ENCODE measurements at regions of chr6 and their contacts with region 1.

Region 1: GRCh38 chr6:42674780-42675179 is 47.6 kb downstream of the PRPH2 start:
- DNase-seq: no peak
- H3K4me3 ChIP-seq: no peak overlapping the region
- H3K27ac ChIP-seq: no peak overlapping the region
- H3K4me1 ChIP-seq: no peaks in the 10 kb centered on the region
- H3K27me3 ChIP-seq: no peaks in the 10 kb centered on the region
- CTCF ChIP-seq: no peak

Region 2: DNA sequence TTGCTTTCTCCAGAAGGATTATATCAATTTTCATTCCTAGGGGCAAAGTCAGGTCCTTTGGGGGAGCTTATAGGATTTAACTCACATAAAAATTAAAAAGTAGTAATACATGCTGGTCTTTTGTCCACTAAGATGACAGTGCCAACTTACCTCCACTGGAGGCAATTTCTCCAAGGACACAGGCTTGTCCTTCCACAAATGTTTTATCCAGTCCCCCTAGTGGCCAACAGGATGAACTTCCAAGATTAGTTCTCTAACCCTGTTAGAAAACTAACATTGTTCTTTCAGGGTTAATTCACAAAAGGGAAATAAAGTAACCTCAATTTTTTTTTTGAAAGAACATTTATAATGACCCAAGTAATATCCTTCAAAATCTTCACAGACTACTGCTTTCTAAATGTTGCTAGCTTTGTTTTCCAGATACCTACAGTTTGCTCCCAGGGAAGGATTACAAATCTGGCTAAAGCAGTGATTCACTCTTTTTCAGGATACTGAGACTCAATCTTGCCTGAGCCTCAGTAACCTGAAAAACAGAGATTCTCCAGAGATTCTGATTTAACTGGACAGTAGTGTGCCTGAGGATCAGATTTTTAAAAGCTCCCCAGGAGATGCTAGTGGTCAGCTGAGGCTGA is 142.6 kb before region 1 on chr6:
- CTCF ChIA-PET with region 1: no interaction called
- POLR2A ChIA-PET with region 1: no interaction called
- intact Hi-C with region 1: no loop called
- DNase-seq: peak; percentile 12 to 49
- H3K4me3 ChIP-seq: no peak overlapping the region
- H3K27ac ChIP-seq: no peak overlapping the region
- H3K4me1 ChIP-seq: peaks cover 14% of the 10 kb centered on the region
- H3K27me3 ChIP-seq: no peaks in the 10 kb centered on the region
- CTCF ChIP-seq: peak; percentile 94

Region 3: GRCh38 chr6:42890311-42891198 is 215.8 kb after region 1 on chr6:
- CTCF ChIA-PET with region 1: no interaction called
- POLR2A ChIA-PET with region 1: interaction called, 11 read pairs
- intact Hi-C with region 1: no loop called
- DNase-seq: peak; percentile 87 to 93
- H3K4me3 ChIP-seq: peak overlapping the region; percentile 80
- H3K27ac ChIP-seq: peak overlapping the region; percentile 89
- H3K4me1 ChIP-seq: peaks cover 17% of the 10 kb centered on the region; the same call in 1 of the 2 replicates
- H3K27me3 ChIP-seq: no peaks in the 10 kb centered on the region
- CTCF ChIP-seq: no peak